ENCODE measurements at regions of chr5 and their contacts with region 1.

Region 1: DNA sequence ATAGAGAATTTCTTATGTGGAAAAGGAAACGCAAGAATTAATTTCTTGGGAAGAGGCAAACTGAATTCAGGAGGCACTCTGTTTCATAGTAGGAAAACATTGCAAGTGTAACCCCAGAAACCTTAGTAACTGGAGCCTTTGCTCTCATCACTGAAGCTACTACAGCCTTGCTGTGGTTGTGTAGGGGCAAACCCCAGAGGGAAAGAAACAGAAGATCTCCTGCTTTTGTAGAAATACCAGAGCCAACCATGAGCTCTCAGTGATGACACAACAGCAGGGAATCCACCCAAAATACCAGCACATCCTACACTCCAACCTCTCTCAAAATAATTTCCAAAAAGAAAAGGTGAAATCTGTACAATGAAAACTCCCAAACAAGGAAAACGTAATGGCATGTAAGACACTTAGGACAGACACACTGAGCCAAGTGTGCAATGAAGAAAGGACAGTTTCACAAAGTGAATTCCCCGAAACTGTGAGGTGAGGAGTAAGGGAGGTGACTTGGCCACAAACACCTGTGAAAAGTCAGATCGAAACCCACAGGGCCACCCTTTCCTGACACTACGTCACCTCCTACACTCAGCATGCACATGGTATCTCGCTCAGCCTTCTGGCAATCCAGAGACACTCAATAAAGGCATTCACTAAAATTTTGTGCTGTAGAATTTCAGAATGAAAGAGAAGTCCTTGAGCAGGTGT is 8.5 kb upstream of the ACSL6 start:
- DNase-seq: peak; percentile 93
- H3K4me3 Mint-ChIP-seq: peak overlapping the region; percentile 37
- H3K27ac Mint-ChIP-seq: peak overlapping the region; percentile 92
- H3K4me1 Mint-ChIP-seq: peaks cover 28% of the 10 kb centered on the region
- H3K27me3 Mint-ChIP-seq: peaks cover 28% of the 10 kb centered on the region

Region 2: DNA sequence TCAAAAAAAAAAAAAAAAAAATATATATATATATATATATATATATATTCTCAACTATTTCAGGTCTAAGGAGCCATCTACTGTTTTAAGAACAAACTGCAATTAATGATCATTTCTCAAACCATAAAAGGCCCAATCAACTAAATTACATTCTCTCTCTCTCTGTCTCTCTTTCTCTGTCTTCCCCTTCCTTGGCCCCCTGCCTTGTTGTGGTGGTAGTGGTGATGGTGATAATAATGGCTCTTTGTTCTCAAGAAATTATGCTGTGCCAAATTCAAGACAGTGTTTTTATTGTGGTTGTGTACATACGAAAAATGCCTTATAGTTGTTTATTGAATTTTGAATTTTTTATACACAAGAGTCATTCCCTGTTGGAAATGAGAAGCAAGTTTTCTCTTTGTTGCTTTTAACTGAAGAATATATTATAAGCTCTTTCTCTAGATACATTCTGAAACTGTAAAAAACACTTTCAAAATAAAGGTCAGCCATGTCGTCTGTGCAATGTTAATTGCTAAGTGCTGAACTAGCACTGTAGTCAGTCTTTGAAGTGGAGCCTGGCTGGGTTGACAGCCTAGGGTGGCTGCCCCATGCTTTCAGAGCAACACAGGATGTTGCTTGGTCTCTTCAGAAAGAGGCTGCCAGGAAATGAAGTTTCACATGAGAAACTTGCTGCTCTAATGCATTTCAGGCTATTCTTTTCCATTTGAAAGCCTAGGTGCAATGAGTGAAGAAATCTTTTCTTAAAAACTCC is 950.9 kb before region 1 on chr5:
- CTCF ChIA-PET with region 1: no interaction called
- intact Hi-C with region 1: loop called (anchors 1 kb)
- DNase-seq: peak; percentile 87
- H3K4me3 Mint-ChIP-seq: no peak overlapping the region
- H3K27ac Mint-ChIP-seq: peak overlapping the region; percentile 94
- H3K4me1 Mint-ChIP-seq: peaks cover 55% of the 10 kb centered on the region
- H3K27me3 Mint-ChIP-seq: no peaks in the 10 kb centered on the region

Region 3: GRCh38 chr5:131394128-131394527 is 625.9 kb before region 1 on chr5:
- CTCF ChIA-PET with region 1: no interaction called
- intact Hi-C with region 1: loop called (anchors 1 kb)
- DNase-seq: peak; percentile 72
- H3K4me3 Mint-ChIP-seq: peak overlapping the region; percentile 67
- H3K27ac Mint-ChIP-seq: peak overlapping the region; percentile 96
- H3K4me1 Mint-ChIP-seq: peaks cover 93% of the 10 kb centered on the region
- H3K27me3 Mint-ChIP-seq: no peaks in the 10 kb centered on the region

Region 4: DNA sequence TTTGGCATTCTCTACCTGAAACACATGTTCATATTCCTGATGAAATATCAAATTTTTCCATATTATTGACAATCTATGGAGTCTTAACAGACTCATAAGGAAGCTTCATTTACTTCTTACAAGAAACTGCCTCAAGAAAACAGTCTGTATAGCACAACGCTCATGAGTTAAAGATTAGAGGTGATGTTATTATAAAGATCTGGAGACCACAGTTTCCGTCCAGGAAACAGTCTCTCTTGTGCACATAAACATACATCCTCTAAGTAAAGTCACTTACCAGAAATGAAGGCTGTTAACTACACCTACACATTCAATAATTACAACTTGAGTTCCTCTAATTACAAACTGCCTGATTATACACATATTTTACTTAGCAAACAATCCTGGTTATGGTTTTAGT is 471.8 kb before region 1 on chr5:
- CTCF ChIA-PET with region 1: no interaction called
- intact Hi-C with region 1: loop called (anchors 1 kb)
- DNase-seq: no peak
- H3K4me3 Mint-ChIP-seq: peak overlapping the region; percentile 89
- H3K27ac Mint-ChIP-seq: peak overlapping the region; percentile 99
- H3K4me1 Mint-ChIP-seq: peaks cover 72% of the 10 kb centered on the region
- H3K27me3 Mint-ChIP-seq: no peaks in the 10 kb centered on the region

Region 5: DNA sequence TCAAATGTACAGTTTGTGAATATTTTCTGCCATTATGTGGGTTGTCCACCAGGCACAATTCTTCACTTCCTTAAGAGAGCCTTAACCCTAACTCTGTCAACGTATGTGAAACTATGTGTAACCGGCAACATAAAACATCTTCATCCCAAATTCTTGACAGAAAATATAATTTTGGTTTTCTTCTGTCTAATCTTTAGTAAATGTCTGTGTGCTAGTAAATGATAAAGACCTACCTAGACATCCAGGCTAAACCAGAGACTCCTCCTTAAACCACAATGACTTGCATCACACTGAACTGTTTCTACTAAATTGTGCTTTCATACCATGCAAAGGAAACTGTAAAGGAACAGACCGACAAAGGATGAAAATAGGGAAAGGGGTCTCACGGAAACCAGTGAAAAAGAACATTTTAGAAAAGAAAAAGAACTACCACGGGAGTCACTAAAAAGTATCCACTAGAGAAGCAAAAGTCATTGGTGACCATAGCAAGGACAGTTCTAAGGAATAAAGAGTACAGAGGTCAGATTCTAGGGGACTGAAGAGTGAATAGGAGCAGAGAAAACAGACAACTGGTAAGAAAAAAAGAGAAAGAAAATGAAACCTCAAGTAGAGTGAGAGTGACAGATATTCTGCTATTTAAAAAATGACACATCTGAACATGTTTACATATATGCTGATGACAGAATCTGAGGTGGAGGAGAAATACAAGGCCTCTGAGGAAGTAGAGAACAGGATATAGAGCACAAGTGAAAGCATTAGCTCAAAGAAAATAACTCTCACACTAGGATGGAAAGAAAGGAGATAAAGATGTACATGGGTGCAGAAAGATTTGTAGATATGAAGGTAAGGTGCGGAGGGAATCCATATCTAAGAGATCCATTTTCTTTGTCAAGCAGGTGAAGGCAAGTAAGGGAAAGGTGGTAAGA is 272.6 kb before region 1 on chr5:
- CTCF ChIA-PET with region 1: no interaction called
- intact Hi-C with region 1: loop called (anchors 5 kb)
- DNase-seq: no peak
- H3K4me3 Mint-ChIP-seq: peak overlapping the region; percentile 49
- H3K27ac Mint-ChIP-seq: peak overlapping the region; percentile 85
- H3K4me1 Mint-ChIP-seq: peaks cover 37% of the 10 kb centered on the region
- H3K27me3 Mint-ChIP-seq: no peaks in the 10 kb centered on the region

Region 6: DNA sequence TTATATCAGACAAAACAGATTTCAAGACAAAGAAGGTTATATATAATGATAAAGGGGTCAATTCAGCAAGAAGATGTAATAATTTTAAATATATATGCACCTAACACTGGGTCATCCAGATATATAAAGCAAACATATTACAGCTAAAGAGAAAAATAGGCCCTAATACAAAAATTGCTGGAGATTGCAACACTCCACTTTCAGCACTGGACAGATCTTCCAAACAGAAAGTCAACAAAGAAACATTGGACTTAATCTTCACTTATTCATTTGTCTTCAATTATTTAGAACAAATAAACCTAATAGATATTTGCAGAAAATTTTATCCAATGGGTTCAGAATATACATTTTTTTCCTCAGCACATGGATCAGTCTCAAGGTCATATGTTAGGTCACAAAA is 120.3 kb before region 1 on chr5:
- CTCF ChIA-PET with region 1: no interaction called
- intact Hi-C with region 1: loop called (anchors 1 kb)
- DNase-seq: no peak
- H3K4me3 Mint-ChIP-seq: no peak overlapping the region
- H3K27ac Mint-ChIP-seq: no peak overlapping the region
- H3K4me1 Mint-ChIP-seq: peaks cover 22% of the 10 kb centered on the region
- H3K27me3 Mint-ChIP-seq: no peaks in the 10 kb centered on the region

Region 7: DNA sequence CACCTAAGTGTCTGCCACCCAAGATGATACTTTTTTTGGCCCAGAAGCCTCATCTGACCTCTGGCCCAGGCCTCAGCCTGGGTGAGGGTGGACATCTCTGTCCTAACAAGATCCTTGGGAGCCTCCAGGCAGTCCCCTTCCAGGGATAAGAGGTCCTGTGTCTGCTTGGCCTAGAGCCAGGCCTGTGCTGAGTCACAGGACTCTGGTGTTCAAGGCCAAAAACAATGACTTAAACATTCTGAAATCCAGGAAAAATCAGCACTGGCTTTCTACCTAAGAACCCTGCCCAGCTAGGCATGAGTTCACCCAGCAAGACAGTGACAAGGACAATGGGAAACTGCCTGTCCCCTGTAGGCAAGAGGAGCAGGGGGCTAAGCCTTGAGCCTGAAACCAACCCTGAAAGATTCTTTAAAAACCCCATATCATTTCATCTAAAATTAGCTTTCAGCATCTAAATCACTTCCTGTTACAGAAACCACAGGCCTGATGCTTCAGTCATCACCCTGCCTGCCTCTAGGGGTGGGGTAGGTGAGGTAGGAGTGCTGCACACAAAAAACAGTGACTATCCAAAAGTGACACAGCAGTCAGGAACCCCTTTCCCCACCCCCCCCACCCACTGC is 83.4 kb after region 1 on chr5:
- CTCF ChIA-PET with region 1: interaction called, 3 read pairs
- intact Hi-C with region 1: loop called (anchors 1 kb)
- DNase-seq: peak; percentile 84
- H3K4me3 Mint-ChIP-seq: no peak overlapping the region
- H3K27ac Mint-ChIP-seq: peak overlapping the region; percentile 73
- H3K4me1 Mint-ChIP-seq: peaks cover 60% of the 10 kb centered on the region
- H3K27me3 Mint-ChIP-seq: no peaks in the 10 kb centered on the region